ENCODE measurements at regions of chr12 and their contacts with region 1.

Region 1: DNA sequence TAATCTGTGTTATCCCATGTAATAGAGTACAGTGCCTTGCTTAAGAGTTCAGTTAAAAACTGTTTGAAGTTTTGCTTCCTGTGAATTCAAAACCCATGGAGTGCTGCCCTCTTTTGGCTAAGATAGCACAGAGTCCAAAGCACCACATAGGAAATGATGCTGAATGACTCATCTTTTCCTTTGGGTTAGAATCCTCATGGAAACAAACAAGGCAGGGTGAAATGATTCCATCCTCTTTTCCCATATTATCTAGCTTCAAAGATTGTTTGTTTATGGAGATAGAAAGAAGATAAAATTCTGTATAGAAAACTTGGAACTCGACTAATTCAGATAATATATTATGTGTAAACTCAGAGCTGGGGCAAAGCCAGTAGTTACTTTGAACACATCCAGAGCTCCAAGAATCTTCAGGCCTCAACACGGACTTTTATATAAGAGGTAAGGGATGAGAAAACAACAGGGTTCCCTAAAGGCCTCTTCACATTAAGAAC is 87.4 kb downstream of the OTOGL start:
- DNase-seq: peak; percentile 72
- H3K4me3 Mint-ChIP-seq: no peak overlapping the region
- H3K27ac Mint-ChIP-seq: no peak overlapping the region
- H3K4me1 Mint-ChIP-seq: no peaks in the 10 kb centered on the region
- H3K27me3 Mint-ChIP-seq: no peaks in the 10 kb centered on the region
- CTCF ChIP-seq: peak; percentile 45

Region 2: DNA sequence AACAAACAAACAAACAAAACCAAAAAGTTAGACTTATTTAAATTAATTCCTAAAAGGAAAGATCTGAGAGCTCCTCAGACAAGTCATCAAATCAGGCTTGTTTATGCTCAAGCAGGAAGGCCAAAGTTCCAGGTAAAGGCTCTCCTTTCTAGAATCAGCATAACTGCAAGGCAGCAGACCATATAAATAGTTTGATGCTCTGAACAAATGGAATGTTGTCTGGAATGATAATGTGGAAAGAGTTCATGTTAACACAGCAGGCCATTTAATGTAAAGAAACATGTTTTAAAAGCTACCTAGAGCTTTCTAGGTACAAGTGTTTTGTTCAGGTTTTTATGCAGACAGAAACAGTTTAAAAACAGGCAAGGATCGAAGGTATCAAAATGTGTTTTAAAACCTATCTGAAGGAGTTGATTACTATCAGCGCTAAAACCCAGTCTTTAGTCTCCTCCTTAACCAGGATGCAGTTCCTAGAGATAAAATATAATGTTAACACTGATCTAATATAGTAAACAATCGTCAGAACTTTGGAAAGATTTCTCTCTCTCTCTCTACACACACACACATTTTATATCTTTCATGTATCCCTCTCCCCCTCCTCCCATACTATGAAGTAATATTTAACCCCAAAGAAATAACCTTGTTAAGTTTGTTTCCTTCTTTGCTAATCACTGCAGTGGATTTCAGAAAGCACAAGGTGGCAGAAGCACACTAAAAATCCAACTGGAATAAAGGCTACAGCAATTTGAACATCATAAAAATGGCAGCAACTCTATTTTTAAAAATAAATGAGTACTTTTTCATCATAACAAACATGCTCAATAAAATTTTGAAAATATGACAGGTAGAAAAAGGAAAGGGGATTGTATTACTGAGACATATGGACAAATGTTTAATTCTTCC is 631.5 kb before region 1 on chr12:
- CTCF ChIA-PET with region 1: no interaction called
- intact Hi-C with region 1: loop called (anchors 5 kb)
- DNase-seq: peak; percentile 44
- H3K4me3 Mint-ChIP-seq: no peak overlapping the region
- H3K27ac Mint-ChIP-seq: peak overlapping the region; percentile 59
- H3K4me1 Mint-ChIP-seq: peaks cover 61% of the 10 kb centered on the region
- H3K27me3 Mint-ChIP-seq: no peaks in the 10 kb centered on the region
- CTCF ChIP-seq: peak; percentile 61

Region 3: GRCh38 chr12:79886917-79887519 is 299.8 kb before region 1 on chr12:
- CTCF ChIA-PET with region 1: interaction called, 4 read pairs
- intact Hi-C with region 1: loop called (anchors 1 kb)
- DNase-seq: no peak
- H3K4me3 Mint-ChIP-seq: no peak overlapping the region
- H3K27ac Mint-ChIP-seq: no peak overlapping the region
- H3K4me1 Mint-ChIP-seq: peaks cover 39% of the 10 kb centered on the region
- H3K27me3 Mint-ChIP-seq: no peaks in the 10 kb centered on the region
- CTCF ChIP-seq: peak; percentile 43

Region 4: GRCh38 chr12:79935021-79935623 is 251.7 kb before region 1 on chr12 and contains the start of gene PPP1R12A:
- CTCF ChIA-PET with region 1: interaction called, 3 read pairs
- intact Hi-C with region 1: loop called (anchors 1 kb)
- DNase-seq: peak; percentile 99
- H3K4me3 Mint-ChIP-seq: peak within 1 kb of the TSS; percentile 93
- H3K27ac Mint-ChIP-seq: peak within 1 kb of the TSS; percentile 94
- H3K4me1 Mint-ChIP-seq: peaks cover 15% of the 10 kb centered on the region
- H3K27me3 Mint-ChIP-seq: no peaks in the 10 kb centered on the region
- CTCF ChIP-seq: no peak
- total RNA-seq, gene PPP1R12A: 86.7 and 97.4 TPM in 2 replicates

Region 5: GRCh38 chr12:79983986-79984620 is 202.7 kb before region 1 on chr12:
- CTCF ChIA-PET with region 1: interaction called, 3 read pairs
- intact Hi-C with region 1: loop called (anchors 2 kb)
- DNase-seq: no peak
- H3K4me3 Mint-ChIP-seq: no peak overlapping the region
- H3K27ac Mint-ChIP-seq: no peak overlapping the region
- H3K4me1 Mint-ChIP-seq: peaks cover 13% of the 10 kb centered on the region
- H3K27me3 Mint-ChIP-seq: no peaks in the 10 kb centered on the region
- CTCF ChIP-seq: no peak

Region 6: GRCh38 chr12:80050236-80050635 is 136.5 kb before region 1 on chr12:
- CTCF ChIA-PET with region 1: no interaction called
- intact Hi-C with region 1: loop called (anchors 2 kb)
- DNase-seq: no peak
- H3K4me3 Mint-ChIP-seq: no peak overlapping the region
- H3K27ac Mint-ChIP-seq: no peak overlapping the region
- H3K4me1 Mint-ChIP-seq: no peaks in the 10 kb centered on the region
- H3K27me3 Mint-ChIP-seq: no peaks in the 10 kb centered on the region
- CTCF ChIP-seq: no peak

Region 7: DNA sequence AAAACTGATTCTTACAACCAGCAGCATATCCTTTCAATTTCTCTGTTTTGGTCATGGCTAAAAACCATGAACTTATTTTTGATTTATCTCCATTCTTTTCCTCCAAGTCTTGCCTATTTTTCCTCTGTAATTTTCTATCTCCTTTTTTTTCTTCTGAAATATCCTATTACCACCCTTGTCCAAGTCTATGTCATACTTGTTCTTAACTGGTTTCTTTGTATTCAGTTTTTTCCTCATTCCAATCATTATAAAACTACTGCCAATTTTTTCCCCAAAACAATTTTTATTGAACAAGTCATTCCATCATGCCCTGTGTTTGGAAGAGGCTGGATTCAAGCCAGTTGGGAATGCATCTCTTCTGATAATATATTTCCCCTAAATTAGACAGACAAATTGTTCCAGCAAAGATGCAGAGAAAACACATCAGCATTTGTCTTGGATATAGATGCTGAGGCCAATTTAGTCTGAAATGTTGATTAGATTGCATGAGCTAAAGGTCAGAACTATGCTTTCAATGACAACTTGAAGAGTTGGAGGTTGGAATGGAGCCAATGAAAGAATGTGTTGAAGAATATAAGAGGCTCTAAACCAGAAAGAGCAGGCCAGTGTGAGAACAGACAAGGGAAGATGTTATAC is 56.8 kb before region 1 on chr12:
- CTCF ChIA-PET with region 1: no interaction called
- intact Hi-C with region 1: no loop called
- DNase-seq: peak; percentile 3
- H3K4me3 Mint-ChIP-seq: no peak overlapping the region
- H3K27ac Mint-ChIP-seq: peak overlapping the region; percentile 34
- H3K4me1 Mint-ChIP-seq: peaks cover 20% of the 10 kb centered on the region
- H3K27me3 Mint-ChIP-seq: no peaks in the 10 kb centered on the region
- CTCF ChIP-seq: no peak

Region 8: GRCh38 chr12:80332827-80333226 is 146.1 kb after region 1 on chr12:
- CTCF ChIA-PET with region 1: no interaction called
- intact Hi-C with region 1: no loop called
- DNase-seq: no peak
- H3K4me3 Mint-ChIP-seq: no peak overlapping the region
- H3K27ac Mint-ChIP-seq: no peak overlapping the region
- H3K4me1 Mint-ChIP-seq: no peaks in the 10 kb centered on the region
- H3K27me3 Mint-ChIP-seq: no peaks in the 10 kb centered on the region
- CTCF ChIP-seq: no peak